ENCODE measurements at regions of chr2 and their contacts with region 1.

Region 1: DNA sequence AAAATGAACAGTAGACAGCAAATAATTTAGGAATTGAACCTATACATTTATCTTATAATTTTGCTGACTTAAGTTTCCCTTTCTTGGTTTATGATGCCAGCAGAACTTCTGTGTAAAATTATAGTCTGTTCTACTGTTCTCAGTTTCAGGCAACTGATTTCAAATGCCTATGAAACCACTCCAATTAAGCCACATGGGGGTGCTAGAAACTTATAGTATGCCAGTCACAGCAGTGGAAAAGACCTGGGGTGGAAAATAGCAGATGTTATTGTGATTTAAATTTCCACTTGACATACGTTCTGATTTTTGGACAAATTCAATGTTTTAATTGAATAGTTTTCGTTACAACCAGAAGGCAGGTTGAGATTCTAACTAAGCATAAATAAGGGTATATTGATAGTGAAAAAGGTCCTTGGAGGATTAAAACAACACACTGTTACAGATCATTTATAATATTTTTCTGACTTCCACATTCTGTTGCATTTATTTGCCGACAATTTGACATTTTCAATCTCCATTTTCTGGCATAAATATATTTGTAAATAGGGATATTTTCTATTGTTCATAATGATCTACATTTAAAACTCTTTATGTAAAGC is 61.4 kb downstream of the CPS1 start:
- DNase-seq: peak; percentile 37
- H3K4me3 ChIP-seq: no peak overlapping the region
- H3K27ac ChIP-seq: no peak overlapping the region
- H3K4me1 ChIP-seq: no peaks in the 10 kb centered on the region
- H3K27me3 ChIP-seq: no peaks in the 10 kb centered on the region
- CTCF ChIP-seq: peak; percentile 33 to 52
- POLR2A ChIP-seq: no peak

Region 2: DNA sequence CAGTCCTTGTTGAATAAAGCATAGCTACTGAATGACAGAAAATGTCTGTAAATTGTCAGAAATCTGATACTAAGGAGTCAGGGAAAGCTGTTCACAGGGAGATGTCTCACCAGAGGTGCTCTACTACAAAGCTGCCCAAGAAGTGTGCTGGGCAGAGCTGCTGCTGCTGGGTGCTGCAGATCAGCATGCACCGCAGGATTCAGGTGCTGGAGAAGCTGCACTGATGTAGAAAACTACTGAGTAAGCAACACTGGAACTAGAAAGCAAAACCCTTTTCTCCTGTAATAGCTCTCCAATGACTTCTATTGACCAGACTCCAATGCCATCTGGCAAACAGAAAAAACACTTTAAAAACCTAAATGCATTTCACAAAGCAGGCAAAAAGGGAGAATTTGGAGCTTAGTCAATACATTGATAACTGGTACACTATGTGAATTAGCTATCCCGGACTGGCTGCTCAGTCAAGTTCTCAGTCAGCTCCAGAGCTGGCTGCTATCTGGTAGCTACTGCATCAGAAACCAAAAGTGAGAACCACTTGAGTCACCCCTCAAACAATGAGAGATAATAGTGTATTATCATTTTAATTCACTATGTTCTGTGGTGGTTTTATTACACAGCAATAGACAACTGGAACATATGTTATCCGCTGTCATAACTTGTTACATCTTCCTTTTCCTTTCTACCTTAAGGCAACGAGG is 431.6 kb after region 1 on chr2:
- CTCF ChIA-PET with region 1: interaction called, 10 read pairs
- POLR2A ChIA-PET with region 1: no interaction called
- dilution Hi-C with region 1: no loop called
- intact Hi-C with region 1: no loop called
- DNase-seq: no peak
- H3K4me3 ChIP-seq: no peak overlapping the region
- H3K27ac ChIP-seq: no peak overlapping the region
- H3K4me1 ChIP-seq: no peaks in the 10 kb centered on the region
- H3K27me3 ChIP-seq: no peaks in the 10 kb centered on the region
- CTCF ChIP-seq: no peak
- POLR2A ChIP-seq: no peak

Region 3: GRCh38 chr2:211093743-211094303 is 476.0 kb after region 1 on chr2:
- CTCF ChIA-PET with region 1: interaction called, 3 read pairs
- POLR2A ChIA-PET with region 1: no interaction called
- dilution Hi-C with region 1: no loop called
- intact Hi-C with region 1: loop called (anchors 5 kb)
- DNase-seq: peak; percentile 11
- H3K4me3 ChIP-seq: no peak overlapping the region
- H3K27ac ChIP-seq: no peak overlapping the region
- H3K4me1 ChIP-seq: no peaks in the 10 kb centered on the region
- H3K27me3 ChIP-seq: no peaks in the 10 kb centered on the region
- CTCF ChIP-seq: peak; percentile 11 to 34
- POLR2A ChIP-seq: no peak

Measured in endothelial cell of umbilical vein (primary cell).